AG04449 (cell line): ENCODE measurements at regions of chr11 and their contacts with region 1.

Region 1: GRCh38 chr11:76721755-76722677 is 51.5 kb upstream of the LRRC32 start:
- DNase-seq: no peak
- H3K4me3 ChIP-seq: no peak overlapping the region
- CTCF ChIP-seq: peak; percentile 94

Region 2: DNA sequence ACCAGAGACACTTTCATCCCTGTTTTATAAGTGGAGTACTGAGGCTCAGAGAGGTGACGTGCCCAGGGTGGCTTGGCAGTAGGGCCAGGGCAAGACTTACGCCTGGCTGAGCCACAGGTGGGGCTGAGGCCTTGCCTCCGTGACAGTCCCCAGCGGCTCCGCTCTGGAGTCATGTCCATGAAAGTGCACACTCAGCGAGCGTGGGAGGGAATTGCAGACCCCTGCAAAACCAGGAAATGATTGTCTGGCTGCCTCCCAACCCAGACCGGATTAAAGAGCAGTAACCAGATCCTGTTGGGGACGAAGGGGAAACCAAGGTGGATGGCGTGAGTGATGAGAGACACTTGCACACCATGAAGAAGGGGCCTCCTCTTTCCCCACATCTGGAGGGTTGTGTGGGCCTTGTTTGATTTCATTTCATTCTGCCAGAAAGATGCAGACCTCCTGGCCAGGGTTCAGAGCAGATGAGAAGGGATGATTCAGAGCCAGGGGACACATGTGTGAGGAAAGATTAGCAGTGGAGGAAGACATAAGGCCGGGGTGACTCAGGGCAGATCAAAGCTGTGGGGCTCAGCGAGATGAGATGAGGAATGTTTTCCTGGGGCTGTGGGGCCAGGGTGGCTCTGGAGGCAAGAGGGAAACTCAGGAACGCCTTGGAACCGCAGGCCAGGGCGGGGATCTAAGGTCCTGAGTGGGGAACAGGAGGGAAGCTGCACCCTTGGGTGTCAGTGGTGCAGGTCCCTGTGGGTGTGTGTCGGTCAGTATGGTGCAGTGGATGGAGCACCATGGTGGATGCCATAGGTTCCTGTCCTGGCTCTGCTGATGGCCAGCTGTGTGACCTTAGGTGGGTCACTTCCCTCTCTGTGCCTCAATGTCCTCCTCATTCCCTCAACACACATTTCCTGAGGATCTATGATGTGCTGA is 21.6 kb before region 1 on chr11:
- CTCF ChIA-PET with region 1: interaction called, 44 read pairs
- POLR2A ChIA-PET with region 1: no interaction called
- DNase-seq: peak; percentile 69
- H3K4me3 ChIP-seq: peak overlapping the region; percentile 15; the same call in 1 of the 2 replicates
- CTCF ChIP-seq: no peak

Region 3: DNA sequence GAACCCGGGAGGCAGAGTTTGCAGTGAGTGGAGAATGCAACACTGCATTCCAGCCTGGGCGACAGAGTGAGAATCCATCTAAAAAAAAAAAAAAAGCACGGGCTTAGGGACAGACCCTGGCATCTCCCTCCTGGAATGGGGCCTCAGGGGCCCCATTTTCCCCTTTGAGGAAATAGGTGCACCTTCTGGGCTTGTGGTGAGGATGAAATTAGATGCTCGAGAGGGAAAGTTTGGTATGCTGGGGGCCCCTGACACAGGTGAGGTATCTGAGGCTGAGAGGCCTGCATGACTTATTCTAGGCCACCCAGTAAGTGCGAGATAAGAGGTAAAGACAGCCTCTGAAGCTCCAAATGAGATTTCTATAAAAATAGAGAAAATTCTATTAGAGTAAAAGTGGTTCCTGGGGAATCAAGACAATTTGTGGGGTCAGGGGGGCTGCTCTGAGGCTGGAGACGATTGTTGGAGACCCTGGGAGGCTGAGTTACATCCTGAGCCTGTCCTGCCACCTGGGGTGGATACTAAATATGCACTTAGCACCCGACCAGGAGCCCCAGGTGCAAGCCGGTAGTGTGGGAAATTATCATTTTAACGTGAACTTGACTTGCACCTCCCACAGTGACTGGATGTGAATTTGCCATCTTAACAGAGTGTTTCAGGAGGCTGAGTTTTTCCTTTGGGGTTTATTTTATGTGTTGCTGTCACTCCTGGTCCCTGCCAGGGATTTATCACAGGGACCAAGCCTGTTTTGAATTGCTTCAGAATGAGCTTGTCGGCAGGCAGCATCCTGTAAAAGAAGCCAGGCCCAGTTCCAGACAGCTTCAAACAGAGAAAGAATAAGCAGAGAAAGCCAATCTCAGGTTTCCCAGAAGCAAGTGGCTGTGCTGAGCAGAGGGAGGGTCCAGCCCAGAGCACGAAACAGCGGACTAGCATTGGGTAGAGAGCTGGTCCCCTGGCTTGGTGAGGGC is 12.7 kb after region 1 on chr11:
- CTCF ChIA-PET with region 1: interaction called, 100 read pairs
- POLR2A ChIA-PET with region 1: no interaction called
- DNase-seq: no peak
- H3K4me3 ChIP-seq: no peak overlapping the region
- CTCF ChIP-seq: no peak

Region 4: GRCh38 chr11:76807206-76807875 is 85.3 kb after region 1 on chr11:
- CTCF ChIA-PET with region 1: interaction called, 419 read pairs
- POLR2A ChIA-PET with region 1: no interaction called
- DNase-seq: no peak
- H3K4me3 ChIP-seq: no peak overlapping the region
- CTCF ChIP-seq: peak; percentile 83